Calu3 (cell line): ENCODE measurements at regions of chr15 and their contacts with region 1.

Region 1: DNA sequence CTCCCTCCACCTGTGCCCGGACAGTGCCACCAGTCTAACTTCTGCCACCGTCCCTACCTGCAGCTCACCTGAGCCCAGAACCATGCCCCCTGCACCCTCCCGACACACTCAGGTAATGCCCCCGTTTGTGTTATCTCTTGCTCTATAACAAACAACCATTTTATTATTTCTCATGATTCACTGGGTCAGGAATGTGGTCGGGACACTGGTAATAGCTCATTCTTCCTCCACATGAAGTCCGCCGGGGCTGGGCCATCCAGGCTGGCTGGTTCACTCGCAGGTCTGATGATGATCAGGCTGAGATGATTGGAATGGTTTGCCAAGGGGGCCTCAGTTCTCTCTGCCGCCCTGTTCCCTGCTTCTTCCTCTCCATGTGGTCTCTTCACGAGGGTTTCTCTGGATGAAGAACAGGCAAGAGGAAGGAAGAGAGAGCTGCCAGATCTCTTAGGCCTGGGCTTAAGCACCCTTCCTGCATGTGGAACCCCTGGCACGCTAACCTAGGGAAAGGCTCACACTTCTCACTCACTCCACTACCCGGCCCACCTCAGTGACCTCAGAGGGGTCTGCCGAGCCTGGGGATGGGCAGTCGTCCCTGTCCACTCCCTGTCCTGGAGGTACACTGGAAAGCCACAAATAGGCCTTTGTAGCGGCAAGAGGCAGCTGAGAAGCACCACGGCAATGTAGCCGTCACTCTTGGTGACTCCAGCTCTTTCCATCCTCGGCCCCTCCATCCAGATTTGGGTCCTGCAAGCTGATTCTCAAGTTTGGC is 20.1 kb upstream of the NR2E3 start:
- DNase-seq: peak; percentile 89
- H3K4me3 Mint-ChIP-seq: peak overlapping the region; percentile 42
- H3K27ac Mint-ChIP-seq: peak overlapping the region; percentile 83
- H3K4me1 Mint-ChIP-seq: peaks cover 57% of the 10 kb centered on the region
- H3K27me3 Mint-ChIP-seq: no peaks in the 10 kb centered on the region
- CTCF ChIP-seq: no peak

Region 2: DNA sequence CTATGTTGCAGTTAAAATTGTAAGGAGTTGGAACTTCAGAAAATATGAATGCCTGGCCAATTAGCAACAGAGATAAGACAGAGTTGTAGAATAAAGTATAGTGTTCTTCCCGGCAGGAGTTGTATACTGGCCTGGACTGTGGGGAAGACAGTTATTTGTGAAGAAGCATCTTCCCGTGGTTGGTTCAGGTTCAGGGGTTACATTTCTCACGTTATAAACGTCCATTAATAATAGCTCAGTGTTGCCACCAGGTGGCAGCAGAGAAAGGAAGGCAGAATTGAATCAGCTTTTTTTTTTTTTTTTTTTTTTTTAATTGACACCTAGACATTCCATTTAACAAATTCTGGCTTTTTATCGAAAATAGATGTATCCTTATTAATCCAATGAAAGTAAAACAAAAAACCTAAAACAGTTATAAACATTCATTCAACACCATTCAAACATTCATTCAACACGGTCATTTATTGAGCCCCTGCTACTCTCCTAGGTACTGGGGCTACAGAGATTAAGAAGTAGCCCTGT is 46.3 kb before region 1 on chr15:
- CTCF ChIA-PET with region 1: interaction called, 19 read pairs
- intact Hi-C with region 1: no loop called
- DNase-seq: peak; percentile 77
- H3K4me3 Mint-ChIP-seq: no peak overlapping the region
- H3K27ac Mint-ChIP-seq: no peak overlapping the region
- H3K4me1 Mint-ChIP-seq: peaks cover 61% of the 10 kb centered on the region
- H3K27me3 Mint-ChIP-seq: no peaks in the 10 kb centered on the region
- CTCF ChIP-seq: peak; percentile 61